ENCODE measurements at regions of chr3 and their contacts with region 1.

Region 1: GRCh38 chr3:157088601-157089454 is 71.1 kb downstream of the CCNL1 start:
- DNase-seq: peak; percentile 87 to 97 (median 93)
- ATAC-seq: peak; percentile 92
- H3K4me3 ChIP-seq: peak overlapping the region; percentile 96 to 98
- H3K4me3 Mint-ChIP-seq: peak overlapping the region; percentile 88
- H3K27ac ChIP-seq: peak overlapping the region; percentile 88 to 95
- H3K27ac Mint-ChIP-seq: peak overlapping the region; percentile 96
- H3K4me1 ChIP-seq: peaks cover 18% of the 10 kb centered on the region
- H3K4me1 Mint-ChIP-seq: peaks cover 26% of the 10 kb centered on the region
- H3K27me3 ChIP-seq: no peaks in the 10 kb centered on the region
- H3K27me3 Mint-ChIP-seq: no peaks in the 10 kb centered on the region
- CTCF ChIP-seq: no peak

Region 2: GRCh38 chr3:155805802-155806618 is 1282.8 kb before region 1 on chr3 and contains the start of gene C3orf33:
- CTCF ChIA-PET with region 1: no interaction called
- POLR2A ChIA-PET with region 1: no interaction called
- intact Hi-C with region 1: no loop called
- DNase-seq: peak; percentile 53 to 88 (median 74)
- ATAC-seq: peak; percentile 95
- H3K4me3 ChIP-seq: peak within 1 kb of the TSS; percentile 87 to 89
- H3K4me3 Mint-ChIP-seq: peak within 1 kb of the TSS; percentile 85
- H3K27ac ChIP-seq: peak within 1 kb of the TSS; percentile 64 to 82
- H3K27ac Mint-ChIP-seq: peak within 1 kb of the TSS; percentile 87
- H3K4me1 ChIP-seq: peaks cover 14% of the 10 kb centered on the region
- H3K4me1 Mint-ChIP-seq: peaks cover 24% of the 10 kb centered on the region
- H3K27me3 ChIP-seq: peaks cover 0 to 3% of the 10 kb centered on the region in 2 experiments
- H3K27me3 Mint-ChIP-seq: peaks cover 11% of the 10 kb centered on the region
- CTCF ChIP-seq: peak; percentile 93
- total RNA-seq, gene C3orf33: 4.6 to 4.7 TPM

Region 3: GRCh38 chr3:156816800-156817645 is 271.8 kb before region 1 on chr3:
- CTCF ChIA-PET with region 1: no interaction called
- POLR2A ChIA-PET with region 1: interaction called, 8 read pairs
- intact Hi-C with region 1: loop called in 1 of 2 experiments (anchors 2 kb)
- DNase-seq: peak; percentile 53 to 95 (median 85)
- ATAC-seq: peak; percentile 80
- H3K4me3 ChIP-seq: peak overlapping the region; percentile 75 to 88
- H3K4me3 Mint-ChIP-seq: peak overlapping the region; percentile 95
- H3K27ac ChIP-seq: peak overlapping the region; percentile 73 to 78
- H3K27ac Mint-ChIP-seq: peak overlapping the region; percentile 95
- H3K4me1 ChIP-seq: peaks cover 18% of the 10 kb centered on the region
- H3K4me1 Mint-ChIP-seq: peaks cover 38% of the 10 kb centered on the region
- H3K27me3 ChIP-seq: no peaks in the 10 kb centered on the region
- H3K27me3 Mint-ChIP-seq: no peaks in the 10 kb centered on the region
- CTCF ChIP-seq: no peak

Region 4: DNA sequence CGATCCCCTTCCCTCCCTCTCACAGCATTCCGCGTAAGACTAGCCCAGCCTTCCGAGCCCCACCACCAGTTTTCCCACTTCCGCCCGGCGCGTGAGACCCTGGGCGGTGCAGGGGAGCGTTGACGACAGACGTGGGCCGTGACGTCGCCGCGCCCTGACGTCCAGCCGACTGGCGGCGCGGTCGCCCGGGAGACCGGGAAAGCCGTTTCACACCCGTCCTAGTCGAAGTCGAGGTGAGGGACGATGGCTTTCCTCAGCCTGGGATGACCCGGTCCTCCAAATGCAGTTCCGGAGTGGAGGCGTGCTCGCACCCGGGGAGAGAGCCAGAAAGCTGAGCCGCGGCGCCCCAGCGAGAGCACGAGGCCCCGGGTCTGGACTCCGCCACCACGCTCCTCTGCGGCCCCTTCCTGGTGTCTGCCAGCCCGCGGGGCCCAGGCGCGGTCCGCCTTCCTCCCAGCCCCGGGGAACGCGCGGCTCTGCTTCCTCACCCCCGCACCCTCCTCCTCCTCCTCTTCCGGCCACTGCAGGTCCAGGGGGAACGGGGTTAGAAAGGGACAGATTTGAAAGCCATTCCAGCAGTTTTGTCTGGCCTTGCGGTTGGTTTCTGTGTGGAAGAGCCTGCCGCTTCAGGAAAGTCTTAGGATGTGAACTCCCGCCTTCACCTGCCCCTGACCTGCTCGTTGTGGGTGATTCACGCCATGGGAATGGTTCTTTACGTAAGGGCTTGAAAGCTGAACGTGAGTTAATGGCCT is 262.5 kb before region 1 on chr3 and contains the start of gene LEKR1:
- CTCF ChIA-PET with region 1: no interaction called
- POLR2A ChIA-PET with region 1: no interaction called
- intact Hi-C with region 1: loop called in 1 of 2 experiments (anchors 2 kb)
- DNase-seq: peak; percentile 28 to 92 (median 67)
- ATAC-seq: peak; percentile 54
- H3K4me3 ChIP-seq: peak within 1 kb of the TSS; percentile 71 to 81
- H3K4me3 Mint-ChIP-seq: peak within 1 kb of the TSS; percentile 89
- H3K27ac ChIP-seq: peak within 1 kb of the TSS; percentile 73 to 92
- H3K27ac Mint-ChIP-seq: peak within 1 kb of the TSS; percentile 95
- H3K4me1 ChIP-seq: peaks cover 9% of the 10 kb centered on the region
- H3K4me1 Mint-ChIP-seq: peaks cover 13% of the 10 kb centered on the region
- H3K27me3 ChIP-seq: no peaks in the 10 kb centered on the region
- H3K27me3 Mint-ChIP-seq: no peaks in the 10 kb centered on the region
- CTCF ChIP-seq: no peak
- total RNA-seq, gene LEKR1: 1.5 to 1.8 TPM

Region 5: GRCh38 chr3:157067114-157067513 is 21.7 kb before region 1 on chr3:
- CTCF ChIA-PET with region 1: interaction called, 13 read pairs
- POLR2A ChIA-PET with region 1: interaction called, 7 read pairs
- intact Hi-C with region 1: no loop called
- DNase-seq: peak in 5 of 9 experiments; percentile 36 to 81 (median 70)
- ATAC-seq: peak; percentile 89
- H3K4me3 ChIP-seq: no peak overlapping the region
- H3K4me3 Mint-ChIP-seq: no peak overlapping the region
- H3K27ac ChIP-seq: peak overlapping the region in 1 of 2 experiments; percentile 42
- H3K27ac Mint-ChIP-seq: peak overlapping the region; percentile 90
- H3K4me1 ChIP-seq: peaks cover 17% of the 10 kb centered on the region
- H3K4me1 Mint-ChIP-seq: peaks cover 38% of the 10 kb centered on the region
- H3K27me3 ChIP-seq: no peaks in the 10 kb centered on the region
- H3K27me3 Mint-ChIP-seq: no peaks in the 10 kb centered on the region
- CTCF ChIP-seq: no peak

Region 6: GRCh38 chr3:157113832-157114505 is 25.1 kb after region 1 on chr3:
- CTCF ChIA-PET with region 1: interaction called, 18 read pairs
- POLR2A ChIA-PET with region 1: interaction called, 4 read pairs
- intact Hi-C with region 1: no loop called
- DNase-seq: peak in 2 of 9 experiments; percentile 38 to 52
- ATAC-seq: peak; percentile 90
- H3K4me3 ChIP-seq: no peak overlapping the region
- H3K4me3 Mint-ChIP-seq: no peak overlapping the region
- H3K27ac ChIP-seq: no peak overlapping the region
- H3K27ac Mint-ChIP-seq: no peak overlapping the region
- H3K4me1 ChIP-seq: no peaks in the 10 kb centered on the region
- H3K4me1 Mint-ChIP-seq: no peaks in the 10 kb centered on the region
- H3K27me3 ChIP-seq: no peaks in the 10 kb centered on the region
- H3K27me3 Mint-ChIP-seq: no peaks in the 10 kb centered on the region
- CTCF ChIP-seq: no peak

Region 7: GRCh38 chr3:157174649-157175498 is 86.0 kb after region 1 on chr3:
- CTCF ChIA-PET with region 1: no interaction called
- POLR2A ChIA-PET with region 1: interaction called, 11 read pairs
- intact Hi-C with region 1: loop called in 1 of 2 experiments (anchors 1 kb)
- DNase-seq: peak; percentile 94 to 100 (median 98)
- ATAC-seq: peak; percentile 91
- H3K4me3 ChIP-seq: peak overlapping the region; percentile 73 to 89
- H3K4me3 Mint-ChIP-seq: peak overlapping the region; percentile 92
- H3K27ac ChIP-seq: peak overlapping the region; percentile 96 to 98
- H3K27ac Mint-ChIP-seq: peak overlapping the region; percentile 99
- H3K4me1 ChIP-seq: peaks cover 25% of the 10 kb centered on the region
- H3K4me1 Mint-ChIP-seq: peaks cover 30% of the 10 kb centered on the region
- H3K27me3 ChIP-seq: no peaks in the 10 kb centered on the region
- H3K27me3 Mint-ChIP-seq: no peaks in the 10 kb centered on the region
- CTCF ChIP-seq: no peak